ENCODE measurements at regions of chr16 and their contacts with region 1.

Region 1: DNA sequence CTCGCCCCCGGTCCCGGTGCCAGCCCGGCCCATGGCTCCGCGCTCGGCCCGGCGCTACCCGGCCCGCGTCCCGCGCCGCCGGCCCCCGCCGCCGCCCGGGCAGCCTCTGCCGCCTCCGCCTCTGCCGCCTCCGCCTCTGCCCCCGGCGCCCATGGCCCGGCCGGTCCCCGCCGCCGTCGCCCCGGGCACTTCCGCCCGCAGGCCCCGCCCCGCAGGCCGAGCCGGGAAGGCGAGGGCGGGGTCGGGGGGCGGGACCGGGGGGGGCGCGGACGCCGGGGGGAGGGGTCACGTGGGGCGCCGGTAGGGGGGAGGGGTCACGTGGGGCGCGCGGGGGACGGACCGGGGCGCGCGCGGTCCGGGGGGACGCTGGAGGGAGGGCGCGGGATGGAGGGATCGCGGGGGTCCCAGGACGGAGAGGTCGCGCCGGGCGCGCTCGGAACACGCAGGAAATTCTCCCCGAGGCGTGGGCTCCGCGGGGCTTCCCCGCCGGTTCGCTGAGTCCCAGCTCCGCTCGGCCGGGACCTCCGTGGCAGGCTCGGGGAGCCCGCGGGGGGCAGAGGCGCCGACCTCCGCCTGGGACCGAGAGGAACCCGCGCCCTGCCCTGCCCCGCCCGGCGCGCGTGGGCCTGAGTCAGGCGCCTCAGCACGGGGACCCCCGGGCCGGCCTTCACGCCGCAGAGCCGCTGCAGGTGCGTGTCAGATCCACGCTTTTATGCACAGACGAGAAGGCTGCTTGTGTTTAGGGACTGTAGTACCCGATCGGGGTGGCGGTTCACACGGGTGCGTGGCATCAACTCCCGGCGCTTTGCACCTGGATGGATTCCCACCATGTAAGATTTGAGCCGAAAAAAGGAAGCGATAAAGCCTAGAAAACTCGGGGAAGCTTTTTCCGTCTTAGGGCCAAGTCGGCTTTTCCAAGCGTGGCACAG is at the start of gene PGAP6:
- DNase-seq: peak; percentile 73
- ATAC-seq: peak; percentile 67
- H3K4me3 Mint-ChIP-seq: peak within 1 kb of the TSS; percentile 89
- H3K27ac Mint-ChIP-seq: peak within 1 kb of the TSS; percentile 78
- H3K4me1 Mint-ChIP-seq: peaks cover 33% of the 10 kb centered on the region
- H3K27me3 Mint-ChIP-seq: no peaks in the 10 kb centered on the region
- CTCF ChIP-seq: no peak
- total RNA-seq, gene PGAP6: 38.4 and 44.5 TPM in 2 replicates

Region 2: GRCh38 chr16:278863-279366 is 103.1 kb before region 1 on chr16:
- CTCF ChIA-PET with region 1: no interaction called
- POLR2A ChIA-PET with region 1: no interaction called
- intact Hi-C with region 1: no loop called
- DNase-seq: no peak
- ATAC-seq: no peak
- H3K4me3 Mint-ChIP-seq: no peak overlapping the region
- H3K27ac Mint-ChIP-seq: no peak overlapping the region
- H3K4me1 Mint-ChIP-seq: peaks cover 6% of the 10 kb centered on the region
- H3K27me3 Mint-ChIP-seq: peaks cover 17% of the 10 kb centered on the region
- CTCF ChIP-seq: no peak

Region 3: DNA sequence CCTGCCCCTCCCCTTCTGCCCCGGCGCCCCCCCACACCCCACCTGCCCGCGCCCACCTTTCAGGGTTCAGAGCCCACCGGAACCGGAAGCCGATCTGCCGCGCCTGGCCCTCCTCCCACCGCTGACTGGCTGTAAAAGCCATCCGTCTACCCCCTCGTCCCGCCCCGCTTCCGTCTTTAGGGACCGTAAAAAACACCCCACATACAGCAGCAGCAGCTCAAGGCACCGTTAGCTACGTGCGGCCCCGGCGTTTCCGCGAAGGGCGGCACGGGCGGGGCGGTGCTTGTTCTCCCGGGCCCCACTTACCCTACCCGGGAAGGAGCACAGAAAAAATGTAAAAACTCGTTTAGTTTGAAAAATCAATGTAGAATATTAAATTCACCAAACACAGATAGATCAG is 11.6 kb before region 1 on chr16 and contains the start of gene MRPL28:
- CTCF ChIA-PET with region 1: interaction called, 4 read pairs
- POLR2A ChIA-PET with region 1: interaction called, 61 read pairs
- intact Hi-C with region 1: loop called (anchors 1 kb)
- DNase-seq: peak; percentile 88
- ATAC-seq: peak; percentile 99
- H3K4me3 Mint-ChIP-seq: peak within 1 kb of the TSS; percentile 93
- H3K27ac Mint-ChIP-seq: peak within 1 kb of the TSS; percentile 91
- H3K4me1 Mint-ChIP-seq: peaks cover 13% of the 10 kb centered on the region
- H3K27me3 Mint-ChIP-seq: no peaks in the 10 kb centered on the region
- CTCF ChIP-seq: no peak
- total RNA-seq, gene MRPL28: 82.4 and 87.3 TPM in 2 replicates

Region 4: GRCh38 chr16:407253-407652 is 25.2 kb after region 1 on chr16:
- CTCF ChIA-PET with region 1: no interaction called
- POLR2A ChIA-PET with region 1: no interaction called
- intact Hi-C with region 1: no loop called
- DNase-seq: no peak
- ATAC-seq: no peak
- H3K4me3 Mint-ChIP-seq: no peak overlapping the region
- H3K27ac Mint-ChIP-seq: no peak overlapping the region
- H3K4me1 Mint-ChIP-seq: no peaks in the 10 kb centered on the region
- H3K27me3 Mint-ChIP-seq: no peaks in the 10 kb centered on the region
- CTCF ChIP-seq: no peak

Region 5: DNA sequence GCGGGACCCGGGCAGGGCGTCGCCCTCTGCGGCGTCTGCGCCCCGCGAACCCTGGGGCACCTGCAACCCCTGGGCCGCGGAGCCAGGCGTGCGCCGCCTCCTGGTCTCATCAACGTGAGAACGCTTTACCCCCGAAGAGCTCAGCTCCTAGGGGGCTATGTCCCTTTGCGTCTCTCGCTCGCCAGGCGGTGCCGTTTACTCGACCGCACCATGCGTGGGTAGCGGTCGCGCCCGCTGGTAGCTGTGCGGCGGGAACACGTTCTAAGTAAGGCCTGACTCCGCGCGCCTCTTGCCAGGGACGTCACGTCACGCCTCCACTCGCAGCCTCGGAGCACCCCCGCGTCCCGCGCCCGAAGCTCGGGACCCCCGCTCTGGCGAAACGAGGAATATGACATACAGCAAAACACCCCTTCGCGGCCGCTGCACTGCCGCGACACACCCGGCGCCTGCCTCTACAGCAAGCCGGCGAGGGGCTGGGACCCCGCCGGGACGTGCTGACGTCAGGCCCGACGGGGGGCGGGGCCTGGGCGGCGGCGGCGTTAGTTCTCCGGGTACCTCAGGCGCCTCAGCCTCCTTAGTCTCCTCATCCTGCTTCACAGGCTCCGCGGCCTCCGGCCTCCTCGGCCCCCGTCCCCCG is 43.1 kb after region 1 on chr16 and contains the start of gene RAB11FIP3:
- CTCF ChIA-PET with region 1: no interaction called
- POLR2A ChIA-PET with region 1: interaction called, 5 read pairs
- intact Hi-C with region 1: loop called (anchors 1 kb)
- DNase-seq: peak; percentile 93
- ATAC-seq: peak; percentile 92
- H3K4me3 Mint-ChIP-seq: peak within 1 kb of the TSS; percentile 89
- H3K27ac Mint-ChIP-seq: peak within 1 kb of the TSS; percentile 82
- H3K4me1 Mint-ChIP-seq: peaks cover 30% of the 10 kb centered on the region
- H3K27me3 Mint-ChIP-seq: no peaks in the 10 kb centered on the region
- CTCF ChIP-seq: no peak
- total RNA-seq, gene RAB11FIP3: 32.2 and 35.4 TPM in 2 replicates

Measured in activated B cell treated with CpG ODN at 0.5 μM for 24 hours (primary cell).